B cell (primary cell): ENCODE measurements at regions of chr2 and their contacts with region 1.

Region 1: GRCh38 chr2:68362069-68362468 is 3.0 kb upstream of the PLEK start:
- DNase-seq: peak; percentile 91
- ATAC-seq: peak; percentile 74
- H3K4me3 ChIP-seq: peak overlapping the region; percentile 14 to 68 (median 42)
- H3K4me3 Mint-ChIP-seq: peak overlapping the region; percentile 97
- H3K27ac ChIP-seq: peak overlapping the region; percentile 89 to 91
- H3K27ac Mint-ChIP-seq: peak overlapping the region; percentile 97
- H3K4me1 ChIP-seq: peaks cover 34 to 46% of the 10 kb centered on the region in 2 donors
- H3K4me1 Mint-ChIP-seq: peaks cover 54% of the 10 kb centered on the region
- H3K27me3 ChIP-seq: no peaks in the 10 kb centered on the region
- H3K27me3 Mint-ChIP-seq: no peaks in the 10 kb centered on the region
- CTCF ChIP-seq: peak; percentile 84

Region 2: GRCh38 chr2:68157402-68158133 is 204.5 kb before region 1 on chr2 and contains the start of gene PNO1:
- CTCF ChIA-PET with region 1: no interaction called
- POLR2A ChIA-PET with region 1: interaction called, 3 read pairs
- intact Hi-C with region 1: loop called (anchors 1 kb)
- DNase-seq: peak; percentile 98
- ATAC-seq: peak; percentile 95
- H3K4me3 ChIP-seq: peak within 1 kb of the TSS; percentile 80 to 93 (median 89)
- H3K4me3 Mint-ChIP-seq: peak within 1 kb of the TSS; percentile 97
- H3K27ac ChIP-seq: peak within 1 kb of the TSS; percentile 96 to 98
- H3K27ac Mint-ChIP-seq: peak within 1 kb of the TSS; percentile 100
- H3K4me1 ChIP-seq: peaks cover 32 to 35% of the 10 kb centered on the region in 2 donors
- H3K4me1 Mint-ChIP-seq: peaks cover 48% of the 10 kb centered on the region
- H3K27me3 ChIP-seq: no peaks in the 10 kb centered on the region
- H3K27me3 Mint-ChIP-seq: no peaks in the 10 kb centered on the region
- CTCF ChIP-seq: no peak
- total RNA-seq, gene PNO1: 10.8 and 12.3 TPM in 2 replicates

Region 3: DNA sequence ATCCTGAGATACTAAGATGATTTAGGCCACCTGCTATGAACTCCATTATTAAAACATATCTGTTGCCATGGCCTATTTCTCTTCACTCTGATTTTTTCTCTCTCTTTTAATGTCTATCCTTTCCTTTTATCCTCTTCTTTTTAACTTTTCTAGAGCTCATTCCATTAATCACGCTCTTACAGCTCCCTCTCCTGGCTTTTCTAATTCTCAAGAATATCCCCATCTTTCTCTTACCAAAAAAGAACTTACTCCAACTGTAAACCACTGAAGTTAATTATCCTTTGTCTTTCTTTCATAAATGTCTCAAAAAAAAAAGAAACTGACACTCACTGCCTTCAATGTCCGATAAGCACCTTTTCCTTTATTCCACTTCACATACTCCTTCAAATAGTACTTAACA is 117.6 kb before region 1 on chr2:
- CTCF ChIA-PET with region 1: no interaction called
- POLR2A ChIA-PET with region 1: no interaction called
- intact Hi-C with region 1: no loop called
- DNase-seq: no peak
- ATAC-seq: no peak
- H3K4me3 ChIP-seq: no peak overlapping the region
- H3K4me3 Mint-ChIP-seq: no peak overlapping the region
- H3K27ac ChIP-seq: peak overlapping the region in 1 of 2 donors; percentile 17
- H3K27ac Mint-ChIP-seq: no peak overlapping the region
- H3K4me1 ChIP-seq: peaks cover 65 to 80% of the 10 kb centered on the region in 2 donors
- H3K4me1 Mint-ChIP-seq: peaks cover 28% of the 10 kb centered on the region
- H3K27me3 ChIP-seq: no peaks in the 10 kb centered on the region
- H3K27me3 Mint-ChIP-seq: no peaks in the 10 kb centered on the region
- CTCF ChIP-seq: no peak

Region 4: GRCh38 chr2:68282811-68283418 is 79.2 kb before region 1 on chr2:
- CTCF ChIA-PET with region 1: interaction called, 8 read pairs
- POLR2A ChIA-PET with region 1: no interaction called
- intact Hi-C with region 1: loop called (anchors 5 kb)
- DNase-seq: peak; percentile 57
- ATAC-seq: peak; percentile 53
- H3K4me3 ChIP-seq: no peak overlapping the region
- H3K4me3 Mint-ChIP-seq: no peak overlapping the region
- H3K27ac ChIP-seq: no peak overlapping the region
- H3K27ac Mint-ChIP-seq: no peak overlapping the region
- H3K4me1 ChIP-seq: peaks cover 0 to 3% of the 10 kb centered on the region in 2 donors
- H3K4me1 Mint-ChIP-seq: peaks cover 4% of the 10 kb centered on the region
- H3K27me3 ChIP-seq: no peaks in the 10 kb centered on the region
- H3K27me3 Mint-ChIP-seq: no peaks in the 10 kb centered on the region
- CTCF ChIP-seq: peak; percentile 88

Region 5: DNA sequence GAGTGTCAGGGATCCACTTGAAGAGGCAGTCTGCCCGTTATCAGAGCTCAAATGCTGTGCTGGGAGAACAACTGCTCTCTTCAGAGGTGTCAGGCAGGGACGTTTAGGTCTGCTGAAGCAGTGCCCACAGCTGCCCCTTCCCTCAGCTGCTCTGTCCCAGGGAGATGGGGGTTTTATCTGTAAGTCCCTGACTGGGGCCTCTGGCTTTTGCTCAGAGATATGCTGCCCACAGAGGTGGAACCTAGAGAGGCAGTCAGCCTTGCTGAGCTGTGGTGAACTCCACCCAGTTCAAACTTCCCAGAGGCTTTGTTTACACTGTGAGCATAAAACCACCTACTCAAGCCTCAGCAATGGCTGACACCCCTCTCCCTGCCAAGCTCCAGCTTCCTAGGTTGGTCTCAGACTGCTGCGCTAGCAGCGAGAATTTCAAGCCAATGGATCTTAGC is 41.2 kb after region 1 on chr2:
- CTCF ChIA-PET with region 1: interaction called, 9 read pairs
- POLR2A ChIA-PET with region 1: no interaction called
- intact Hi-C with region 1: loop called (anchors 5 kb)
- DNase-seq: peak; percentile 73
- ATAC-seq: peak; percentile 81
- H3K4me3 ChIP-seq: peak overlapping the region in 1 of 5 experiments; percentile 38
- H3K4me3 Mint-ChIP-seq: peak overlapping the region; percentile 70
- H3K27ac ChIP-seq: peak overlapping the region; percentile 76 to 86
- H3K27ac Mint-ChIP-seq: peak overlapping the region; percentile 95
- H3K4me1 ChIP-seq: peaks cover 37 to 48% of the 10 kb centered on the region in 2 donors
- H3K4me1 Mint-ChIP-seq: peaks cover 88% of the 10 kb centered on the region
- H3K27me3 ChIP-seq: no peaks in the 10 kb centered on the region
- H3K27me3 Mint-ChIP-seq: no peaks in the 10 kb centered on the region
- CTCF ChIP-seq: no peak

Region 6: GRCh38 chr2:68441179-68441993 is 79.3 kb after region 1 on chr2:
- CTCF ChIA-PET with region 1: interaction called, 163 read pairs
- POLR2A ChIA-PET with region 1: interaction called, 3 read pairs
- intact Hi-C with region 1: loop called (anchors 1 kb)
- DNase-seq: peak; percentile 97
- ATAC-seq: peak; percentile 98
- H3K4me3 ChIP-seq: peak overlapping the region in 1 of 5 experiments; percentile 45
- H3K4me3 Mint-ChIP-seq: peak overlapping the region; percentile 77
- H3K27ac ChIP-seq: peak overlapping the region; percentile 75 to 90
- H3K27ac Mint-ChIP-seq: peak overlapping the region; percentile 95
- H3K4me1 ChIP-seq: peaks cover 33 to 39% of the 10 kb centered on the region in 2 donors
- H3K4me1 Mint-ChIP-seq: peaks cover 46% of the 10 kb centered on the region
- H3K27me3 ChIP-seq: no peaks in the 10 kb centered on the region
- H3K27me3 Mint-ChIP-seq: no peaks in the 10 kb centered on the region
- CTCF ChIP-seq: peak; percentile 97